HepG2 (cell line): ENCODE measurements at regions of chr6 and their contacts with region 1.

Region 1: GRCh38 chr6:32244946-32245398 is 21.1 kb upstream of the NOTCH4 start:
- DNase-seq: peak; percentile 43
- ATAC-seq: peak; percentile 84
- H3K4me3 ChIP-seq: no peak overlapping the region; a peak in 1 of 6 replicates
- H3K27ac ChIP-seq: no peak overlapping the region
- H3K4me1 ChIP-seq: no peaks in the 10 kb centered on the region
- H3K27me3 ChIP-seq: peaks cover 0 to 23% of the 10 kb centered on the region in 2 experiments; a peak in 3 of 5 replicates
- CTCF ChIP-seq: peak; percentile 92
- EP300 ChIP-seq: no peak
- POLR2A ChIP-seq: no peak
- RAD21 ChIP-seq: peak; percentile 70

Region 2: DNA sequence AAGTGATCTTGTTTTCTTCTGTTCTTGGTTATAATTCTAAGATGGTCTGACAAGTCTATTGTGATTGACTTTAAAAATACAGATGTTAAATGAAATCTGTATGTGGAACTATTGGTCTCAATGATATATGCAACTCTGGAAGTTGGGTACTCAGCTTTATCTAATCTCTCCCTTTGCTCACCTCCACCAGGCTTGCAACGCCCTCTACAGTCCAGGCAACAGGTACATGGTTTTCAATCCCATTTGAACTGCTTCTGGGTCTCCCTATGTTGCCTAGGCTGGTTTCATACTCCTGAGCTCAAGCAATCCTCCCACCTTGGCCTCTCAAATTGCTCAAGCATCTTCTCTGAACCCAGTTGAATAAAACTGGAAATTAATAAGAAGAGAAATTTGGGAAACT is 447.0 kb after region 1 on chr6:
- CTCF ChIA-PET with region 1: no interaction called
- POLR2A ChIA-PET with region 1: no interaction called
- in situ Hi-C with region 1: no loop called
- intact Hi-C with region 1: loop called (anchors 10 kb)
- DNase-seq: peak; percentile 35
- ATAC-seq: peak; percentile 68
- H3K4me3 ChIP-seq: no peak overlapping the region
- H3K27ac ChIP-seq: no peak overlapping the region
- H3K4me1 ChIP-seq: no peaks in the 10 kb centered on the region
- H3K27me3 ChIP-seq: 0 out of 5 replicates have a peak, but pooled peaks cover 0 to 2% of the 10 kb centered on the region in 2 experiments
- CTCF ChIP-seq: peak; percentile 74
- EP300 ChIP-seq: no peak
- POLR2A ChIP-seq: no peak
- RAD21 ChIP-seq: no peak